HEK293 (cell line): ENCODE measurements at regions of chr10 and their contacts with region 1.

Region 1: DNA sequence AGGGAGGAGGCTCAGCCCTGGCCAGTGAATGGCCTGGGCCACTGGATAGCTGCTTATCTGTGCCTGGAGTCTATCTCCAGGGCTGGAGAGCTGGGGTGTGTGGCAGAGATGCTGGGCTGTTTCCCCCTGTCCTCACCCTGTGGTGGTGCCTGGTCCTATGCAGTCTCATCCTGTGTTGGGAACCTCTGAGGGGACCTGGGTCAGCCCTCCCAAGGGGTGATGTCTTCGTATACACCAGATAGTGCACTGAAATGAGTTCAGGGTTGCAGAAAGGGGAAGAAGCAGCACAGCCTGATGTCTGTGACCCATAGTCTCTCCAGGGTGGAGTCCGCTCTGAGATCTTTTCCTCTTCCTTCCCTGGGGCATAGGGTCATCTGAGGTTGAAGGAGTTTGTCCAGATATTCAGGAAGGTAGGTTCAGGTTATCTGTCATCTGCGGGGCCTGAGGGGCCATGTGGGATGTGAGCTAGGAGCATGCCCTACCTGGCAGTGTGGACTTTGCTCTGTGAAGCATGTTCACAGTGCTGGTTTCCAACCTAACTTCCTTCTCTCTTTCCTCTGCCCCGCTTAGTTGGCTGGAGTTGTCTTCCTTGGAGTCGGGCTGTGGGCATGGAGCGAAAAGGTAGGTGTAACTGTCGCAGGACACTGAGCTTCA is 33.4 kb upstream of the SH2D4B start:
- H3K4me3 ChIP-seq: no peak overlapping the region
- H3K27ac ChIP-seq: no peak overlapping the region
- H3K4me1 ChIP-seq: no peaks in the 10 kb centered on the region; the same call in 1 of the 2 replicates
- CTCF ChIP-seq: no peak

Region 2: DNA sequence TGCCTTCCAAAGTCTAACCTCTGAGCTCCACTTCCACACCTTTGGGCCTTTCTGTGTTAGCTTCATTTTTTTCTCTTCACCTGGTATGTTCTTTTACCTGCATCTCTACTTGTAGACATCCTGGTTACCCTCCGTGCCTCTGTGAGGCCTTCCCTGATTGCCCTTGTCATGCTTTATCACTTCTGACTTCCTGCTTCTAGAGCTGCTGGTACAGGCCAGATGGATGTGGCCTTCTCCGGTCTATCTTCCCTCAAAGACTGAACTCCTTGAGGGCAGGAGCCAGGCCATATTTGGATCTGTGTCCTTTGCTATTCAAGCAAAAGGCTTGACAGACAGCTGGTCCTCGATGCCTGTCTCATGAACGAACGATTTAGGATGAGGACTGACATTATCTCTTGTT is 72.7 kb before region 1 on chr10:
- CTCF ChIA-PET with region 1: interaction called, 10 read pairs
- POLR2A ChIA-PET with region 1: no interaction called
- H3K4me3 ChIP-seq: no peak overlapping the region
- H3K27ac ChIP-seq: no peak overlapping the region
- H3K4me1 ChIP-seq: no peaks in the 10 kb centered on the region
- CTCF ChIP-seq: no peak

Region 3: GRCh38 chr10:80437231-80437630 is 67.1 kb before region 1 on chr10:
- CTCF ChIA-PET with region 1: interaction called, 10 read pairs
- POLR2A ChIA-PET with region 1: no interaction called
- H3K4me3 ChIP-seq: no peak overlapping the region
- H3K27ac ChIP-seq: no peak overlapping the region
- H3K4me1 ChIP-seq: no peaks in the 10 kb centered on the region
- CTCF ChIP-seq: no peak

Region 4: GRCh38 chr10:80444646-80445319 is 59.5 kb before region 1 on chr10:
- CTCF ChIA-PET with region 1: interaction called, 75 read pairs
- POLR2A ChIA-PET with region 1: interaction called, 6 read pairs
- H3K4me3 ChIP-seq: no peak overlapping the region
- H3K27ac ChIP-seq: no peak overlapping the region
- H3K4me1 ChIP-seq: no peaks in the 10 kb centered on the region
- CTCF ChIP-seq: peak; percentile 90

Region 5: DNA sequence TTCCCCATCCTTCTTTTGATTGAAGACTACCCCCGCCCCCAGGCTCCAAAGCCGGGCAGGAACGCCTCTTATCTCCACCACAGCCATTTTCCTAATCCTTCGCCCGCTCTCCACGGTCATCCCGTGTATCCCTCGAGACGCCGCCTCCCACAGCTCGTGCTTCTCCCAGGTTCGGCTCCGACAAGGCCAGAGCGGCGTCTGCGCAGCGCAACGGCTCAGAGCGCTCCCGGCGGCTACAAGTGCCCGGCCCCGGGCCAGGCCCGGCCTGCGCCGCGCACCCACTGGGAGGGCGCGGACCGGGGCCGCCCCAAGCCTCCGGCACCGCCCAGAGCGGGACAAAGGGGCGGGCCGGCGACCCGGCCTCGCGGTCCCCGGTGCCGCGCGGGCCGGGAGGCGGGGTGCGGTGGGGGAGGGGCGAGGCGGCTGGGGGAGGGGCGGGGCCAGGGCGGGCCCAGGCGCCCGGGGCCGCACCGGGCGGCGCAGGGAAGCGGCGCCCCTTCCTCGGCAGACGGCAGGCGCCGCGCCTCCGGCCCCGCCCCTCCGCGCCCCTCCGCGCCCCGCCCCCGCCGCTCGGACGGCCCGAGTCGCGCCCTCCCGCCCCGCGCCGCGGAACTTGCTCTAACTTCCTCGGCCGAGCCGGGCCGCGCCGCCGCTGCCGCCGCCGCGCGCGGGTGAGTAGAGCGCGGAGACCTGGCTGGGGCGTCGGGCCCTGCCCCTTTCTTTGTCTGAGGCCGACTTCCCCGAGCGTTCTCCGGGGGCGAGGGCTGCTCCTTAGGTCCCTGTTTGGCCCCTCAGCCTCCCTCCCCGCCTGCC is 50.4 kb before region 1 on chr10 and contains the start of gene TSPAN14:
- CTCF ChIA-PET with region 1: interaction called, 45 read pairs
- POLR2A ChIA-PET with region 1: interaction called, 3 read pairs
- H3K4me3 ChIP-seq: peak within 1 kb of the TSS; percentile 71
- H3K27ac ChIP-seq: peak within 1 kb of the TSS; percentile 75; the same call in 1 of the 2 replicates
- H3K4me1 ChIP-seq: no peaks in the 10 kb centered on the region; the same call in 1 of the 2 replicates
- CTCF ChIP-seq: no peak; the same call in 1 of the 2 replicates

Region 6: GRCh38 chr10:80459047-80459931 is 45.0 kb before region 1 on chr10:
- CTCF ChIA-PET with region 1: interaction called, 20 read pairs
- POLR2A ChIA-PET with region 1: interaction called, 3 read pairs
- H3K4me3 ChIP-seq: no peak overlapping the region
- H3K27ac ChIP-seq: no peak overlapping the region
- H3K4me1 ChIP-seq: peaks cover 4% of the 10 kb centered on the region; the same call in 1 of the 2 replicates
- CTCF ChIP-seq: no peak

Region 7: GRCh38 chr10:80493522-80494051 is 10.7 kb before region 1 on chr10:
- CTCF ChIA-PET with region 1: interaction called, 20 read pairs
- POLR2A ChIA-PET with region 1: no interaction called
- H3K4me3 ChIP-seq: no peak overlapping the region
- H3K27ac ChIP-seq: no peak overlapping the region
- H3K4me1 ChIP-seq: no peaks in the 10 kb centered on the region
- CTCF ChIP-seq: no peak